ENCODE measurements at regions of chr6 and their contacts with region 1.

Region 1: DNA sequence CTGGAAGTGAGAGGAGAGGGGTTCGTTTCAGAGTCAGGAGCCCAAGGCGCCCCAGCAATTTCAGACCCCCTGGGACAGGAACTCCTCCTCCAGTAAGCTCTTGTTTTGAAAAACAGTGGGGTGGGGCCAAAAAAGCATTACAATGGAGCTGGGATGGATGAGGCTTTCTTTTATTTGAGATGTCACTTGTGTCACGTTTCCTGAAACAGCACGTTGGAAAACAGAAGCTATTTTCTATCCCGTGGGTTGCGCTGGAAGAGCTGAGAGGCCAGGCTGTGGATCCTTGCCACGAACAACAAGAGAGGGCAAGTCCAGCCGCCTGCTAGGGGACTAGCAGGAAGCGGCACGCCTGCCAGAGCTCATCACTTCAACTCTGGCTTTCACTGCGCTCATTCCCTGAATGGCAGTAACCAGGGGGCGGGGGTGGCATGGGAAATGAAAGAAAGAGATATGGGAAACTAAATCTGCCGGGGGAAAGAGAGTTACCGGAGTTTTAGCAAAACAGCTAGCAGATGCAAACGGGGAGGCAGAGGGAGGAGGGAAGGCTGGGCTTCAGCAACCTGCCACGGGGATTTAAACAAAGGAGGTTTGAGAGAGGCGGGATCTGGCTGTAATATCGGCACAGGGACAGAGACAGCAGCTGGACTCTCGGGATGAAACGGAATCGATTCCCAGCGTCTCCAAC is 34.6 kb downstream of the GCNT2 start:
- DNase-seq: no peak
- ATAC-seq: peak; percentile 44; the same call in 2 of the 3 replicates
- H3K4me3 ChIP-seq: no peak overlapping the region
- H3K27ac ChIP-seq: no peak overlapping the region
- H3K4me1 ChIP-seq: no peaks in the 10 kb centered on the region
- H3K27me3 ChIP-seq: peaks cover 37 to 44% of the 10 kb centered on the region in 2 experiments
- CTCF ChIP-seq: no peak
- EP300 ChIP-seq: no peak
- POLR2A ChIP-seq: no peak
- RAD21 ChIP-seq: no peak

Region 2: DNA sequence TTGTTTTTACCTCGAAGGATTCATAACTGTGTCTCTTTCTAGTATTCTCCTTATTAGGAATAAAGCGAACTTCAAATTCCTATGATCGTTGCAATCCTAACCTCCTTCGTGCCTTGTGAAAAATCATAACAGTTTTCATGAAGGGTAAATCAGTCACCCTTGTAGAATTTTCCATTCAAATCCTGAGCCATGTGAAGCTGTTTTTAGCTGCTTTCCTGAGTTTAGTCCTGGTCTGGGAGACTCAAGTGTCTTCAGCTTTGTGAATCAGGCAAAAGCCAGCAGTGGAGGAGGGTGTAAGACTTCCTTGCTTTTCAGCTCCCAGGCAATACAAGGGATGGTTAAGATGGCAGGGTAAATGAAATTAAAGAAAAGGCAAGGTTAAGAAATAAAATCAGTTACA is 10.3 kb before region 1 on chr6:
- CTCF ChIA-PET with region 1: no interaction called
- POLR2A ChIA-PET with region 1: interaction called, 12 read pairs
- in situ Hi-C with region 1: no loop called
- intact Hi-C with region 1: no loop called
- DNase-seq: no peak
- ATAC-seq: peak; percentile 31; the same call in 2 of the 3 replicates
- H3K4me3 ChIP-seq: no peak overlapping the region
- H3K27ac ChIP-seq: no peak overlapping the region
- H3K4me1 ChIP-seq: no peaks in the 10 kb centered on the region
- H3K27me3 ChIP-seq: peaks cover 4 to 11% of the 10 kb centered on the region in 2 experiments; a peak in 3 of 5 replicates
- CTCF ChIP-seq: no peak
- EP300 ChIP-seq: no peak
- POLR2A ChIP-seq: no peak
- RAD21 ChIP-seq: no peak

Region 3: GRCh38 chr6:11064836-11065235 is 509.1 kb after region 1 on chr6:
- CTCF ChIA-PET with region 1: no interaction called
- POLR2A ChIA-PET with region 1: no interaction called
- in situ Hi-C with region 1: no loop called
- intact Hi-C with region 1: no loop called
- DNase-seq: no peak
- ATAC-seq: no peak
- H3K4me3 ChIP-seq: no peak overlapping the region
- H3K27ac ChIP-seq: no peak overlapping the region
- H3K4me1 ChIP-seq: peaks cover 3% of the 10 kb centered on the region in 2 experiments; a peak in 3 of 5 replicates
- H3K27me3 ChIP-seq: peaks cover 0 to 2% of the 10 kb centered on the region in 2 experiments; a peak in 1 of 5 replicates
- CTCF ChIP-seq: no peak
- EP300 ChIP-seq: no peak
- POLR2A ChIP-seq: no peak
- RAD21 ChIP-seq: no peak